ENCODE measurements at regions of chr12 and their contacts with region 1.

Region 1: GRCh38 chr12:95083938-95084337 is 10.5 kb upstream of the NR2C1 start:
- DNase-seq: no peak
- H3K4me3 ChIP-seq: no peak overlapping the region
- H3K27me3 ChIP-seq: no peaks in the 10 kb centered on the region
- CTCF ChIP-seq: no peak

Region 2: DNA sequence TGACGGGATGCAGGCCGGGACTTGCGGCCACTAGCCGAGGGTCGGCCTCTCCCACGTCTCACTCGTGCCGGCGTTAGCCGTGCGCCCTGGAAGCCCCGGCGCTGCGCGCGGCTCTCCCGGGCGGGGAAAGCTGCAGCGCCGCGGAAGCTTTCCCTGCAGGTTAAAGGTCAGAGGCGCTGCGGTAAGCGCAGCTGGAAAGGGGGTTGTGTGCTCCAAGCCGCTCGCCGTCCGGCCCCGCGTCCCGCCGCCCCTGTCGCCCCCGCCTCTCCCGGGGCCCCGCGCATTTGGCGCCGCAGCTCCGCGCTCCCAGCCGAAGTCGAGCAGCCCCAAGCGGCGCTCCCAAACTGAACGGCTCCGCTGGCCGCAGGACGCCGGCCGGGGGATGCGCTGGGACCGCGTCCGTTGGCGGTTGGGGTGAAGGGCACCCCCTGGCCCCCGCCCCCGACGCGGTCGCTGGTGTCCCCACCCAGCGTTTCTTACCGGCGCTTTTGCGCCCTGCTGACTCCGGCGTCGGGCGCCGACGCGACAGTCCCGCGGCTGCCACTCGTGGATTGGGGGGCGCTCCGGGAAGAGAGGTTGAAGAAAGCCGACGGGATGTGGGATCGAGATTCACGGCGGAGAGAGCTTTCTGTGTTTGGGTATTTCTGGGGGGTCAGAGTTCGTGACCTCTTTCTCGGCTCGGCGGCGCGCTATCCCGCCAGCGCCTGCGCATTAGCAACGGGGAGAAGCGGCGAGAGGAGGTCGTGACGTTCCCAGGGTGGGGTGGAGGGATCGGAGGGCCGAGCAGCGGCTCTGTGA is 10.8 kb before region 1 on chr12 and contains the start of gene NR2C1:
- CTCF ChIA-PET with region 1: interaction called, 13 read pairs
- POLR2A ChIA-PET with region 1: no interaction called
- DNase-seq: peak; percentile 34
- H3K4me3 ChIP-seq: peak within 1 kb of the TSS; percentile 80
- H3K27me3 ChIP-seq: no peaks in the 10 kb centered on the region
- CTCF ChIP-seq: no peak
- polyA plus RNA-seq, gene NR2C1: 12.1 and 24.1 TPM in 2 replicates

Region 3: DNA sequence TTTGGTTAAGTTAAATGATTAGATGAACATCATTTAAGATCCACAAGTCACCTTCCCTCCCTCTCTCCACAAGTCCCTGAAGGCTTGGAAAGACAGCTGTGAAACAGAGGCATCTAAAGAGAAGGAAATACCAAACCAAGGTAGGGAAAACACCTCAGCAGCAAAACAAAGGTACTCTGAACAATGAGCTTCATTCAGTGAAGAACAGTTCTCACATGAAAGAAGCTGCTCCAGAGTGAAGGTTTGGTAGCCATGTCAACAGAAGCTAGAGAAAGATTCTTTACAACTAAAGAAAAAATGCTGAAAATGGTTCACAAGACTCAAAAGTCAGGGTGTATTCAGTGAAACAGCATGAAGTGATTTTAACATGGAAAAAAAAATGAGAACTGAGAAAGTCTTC is 63.9 kb after region 1 on chr12:
- CTCF ChIA-PET with region 1: no interaction called
- POLR2A ChIA-PET with region 1: no interaction called
- DNase-seq: no peak
- H3K4me3 ChIP-seq: no peak overlapping the region
- H3K27me3 ChIP-seq: no peaks in the 10 kb centered on the region
- CTCF ChIP-seq: no peak

Measured in BJ (cell line).